ENCODE measurements at regions of chr2 and their contacts with region 1.

Region 1: GRCh38 chr2:240586198-240586918 is at the start of gene CAPN10:
- DNase-seq: peak; percentile 96
- ATAC-seq: peak; percentile 71
- H3K4me3 Mint-ChIP-seq: peak within 1 kb of the TSS; percentile 95
- H3K27ac Mint-ChIP-seq: peak within 1 kb of the TSS; percentile 96
- H3K4me1 Mint-ChIP-seq: peaks cover 58% of the 10 kb centered on the region
- H3K27me3 Mint-ChIP-seq: no peaks in the 10 kb centered on the region
- CTCF ChIP-seq: no peak
- total RNA-seq, gene CAPN10: 55.2 and 61.8 TPM in 2 replicates

Region 2: DNA sequence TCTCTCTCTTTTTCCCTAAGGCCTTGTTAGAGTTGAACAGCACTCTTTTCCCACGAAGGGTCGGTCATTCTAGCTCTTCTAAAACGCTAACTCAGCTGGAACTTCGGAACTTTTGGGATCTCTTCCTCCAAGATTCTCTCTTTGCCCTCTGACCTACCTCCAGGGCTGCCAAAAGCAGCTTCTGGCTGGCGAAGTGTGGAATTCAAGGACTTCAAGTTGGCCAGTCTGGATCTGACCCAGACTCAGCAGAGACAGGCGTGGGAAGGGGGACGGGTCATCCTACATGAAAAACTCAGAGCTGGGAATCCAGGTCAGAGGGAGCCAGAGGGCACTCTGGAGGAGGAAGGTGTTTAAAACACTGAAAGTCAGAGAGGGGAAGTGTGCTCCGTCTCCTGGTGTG is 880.0 kb before region 1 on chr2:
- CTCF ChIA-PET with region 1: no interaction called
- POLR2A ChIA-PET with region 1: no interaction called
- intact Hi-C with region 1: no loop called
- DNase-seq: no peak
- ATAC-seq: no peak
- H3K4me3 Mint-ChIP-seq: no peak overlapping the region
- H3K27ac Mint-ChIP-seq: no peak overlapping the region
- H3K4me1 Mint-ChIP-seq: no peaks in the 10 kb centered on the region
- H3K27me3 Mint-ChIP-seq: peaks cover 16% of the 10 kb centered on the region
- CTCF ChIP-seq: no peak

Region 3: GRCh38 chr2:240021488-240022104 is 564.8 kb before region 1 on chr2:
- CTCF ChIA-PET with region 1: no interaction called
- POLR2A ChIA-PET with region 1: interaction called, 11 read pairs
- intact Hi-C with region 1: no loop called
- DNase-seq: peak; percentile 50
- ATAC-seq: peak; percentile 23
- H3K4me3 Mint-ChIP-seq: no peak overlapping the region
- H3K27ac Mint-ChIP-seq: no peak overlapping the region
- H3K4me1 Mint-ChIP-seq: peaks cover 16% of the 10 kb centered on the region
- H3K27me3 Mint-ChIP-seq: no peaks in the 10 kb centered on the region
- CTCF ChIP-seq: no peak

Region 4: DNA sequence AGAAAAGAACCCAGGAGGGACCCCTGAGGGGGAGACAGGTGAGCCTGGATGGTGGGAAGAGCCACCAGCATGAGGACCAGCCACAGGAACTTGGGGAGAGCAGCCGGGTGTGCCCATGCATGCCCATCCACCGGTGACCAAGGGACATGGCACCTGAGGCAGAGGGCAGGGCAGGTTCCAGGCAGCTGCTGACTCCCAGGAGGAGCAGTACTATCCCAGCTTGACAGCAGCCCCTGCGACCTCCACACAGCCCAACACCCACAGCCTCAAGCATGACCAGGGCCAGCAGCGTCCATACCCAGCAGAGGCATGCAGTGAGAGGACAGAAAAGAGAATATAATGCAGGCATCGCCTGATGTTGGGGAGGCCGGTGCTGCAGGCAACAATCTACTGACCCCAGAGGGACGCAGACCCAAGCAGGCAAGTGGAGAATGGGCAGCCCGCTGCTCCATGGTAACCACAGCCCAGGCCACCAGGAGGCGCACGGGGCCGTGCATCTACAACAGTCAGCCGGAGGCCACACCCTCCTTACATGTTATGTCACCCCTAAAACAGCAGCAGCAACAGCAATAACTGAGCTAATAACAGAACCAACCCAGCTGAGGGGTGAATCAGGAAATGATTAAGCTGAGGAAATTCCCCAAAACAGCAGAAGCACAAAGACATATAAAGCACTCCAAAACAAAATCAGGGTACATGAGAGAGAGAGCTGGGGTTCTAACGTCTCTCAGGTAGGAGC is 72.6 kb before region 1 on chr2:
- CTCF ChIA-PET with region 1: interaction called, 11 read pairs
- POLR2A ChIA-PET with region 1: interaction called, 14 read pairs
- intact Hi-C with region 1: loop called (anchors 1 kb)
- DNase-seq: peak; percentile 71
- ATAC-seq: peak; percentile 99
- H3K4me3 Mint-ChIP-seq: peak overlapping the region; percentile 28
- H3K27ac Mint-ChIP-seq: peak overlapping the region; percentile 59
- H3K4me1 Mint-ChIP-seq: peaks cover 17% of the 10 kb centered on the region
- H3K27me3 Mint-ChIP-seq: no peaks in the 10 kb centered on the region
- CTCF ChIP-seq: peak; percentile 23

Region 5: DNA sequence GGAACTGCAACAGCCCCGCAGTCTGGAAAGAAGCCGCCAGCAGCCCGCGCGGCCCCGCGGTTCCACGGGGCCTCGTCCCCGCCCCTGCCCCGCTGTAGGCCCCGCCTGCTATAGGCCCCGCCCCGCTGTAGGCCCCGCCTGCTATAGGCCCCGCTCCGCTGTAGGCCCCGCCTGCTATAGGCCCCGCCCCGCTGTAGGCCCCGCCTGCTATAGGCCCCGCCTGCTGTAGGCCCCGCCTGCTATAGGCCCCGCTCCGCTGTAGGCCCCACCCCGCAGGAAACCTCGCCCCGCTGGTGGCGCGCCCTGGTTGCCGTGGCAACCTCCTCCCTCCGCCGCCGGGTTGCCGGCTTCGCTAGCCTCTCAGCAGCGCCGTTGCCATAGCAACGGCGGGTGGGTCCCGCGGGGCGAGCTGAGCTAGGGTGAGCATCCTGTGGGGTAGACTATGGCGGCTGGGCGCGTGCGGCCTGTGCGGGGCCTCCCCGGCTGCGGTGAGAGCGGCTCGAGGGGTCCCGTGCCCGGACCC is 245.9 kb after region 1 on chr2:
- CTCF ChIA-PET with region 1: no interaction called
- POLR2A ChIA-PET with region 1: no interaction called
- intact Hi-C with region 1: loop called (anchors 1 kb)
- DNase-seq: peak; percentile 89
- ATAC-seq: peak; percentile 94
- H3K4me3 Mint-ChIP-seq: peak overlapping the region; percentile 55
- H3K27ac Mint-ChIP-seq: no peak overlapping the region
- H3K4me1 Mint-ChIP-seq: peaks cover 5% of the 10 kb centered on the region
- H3K27me3 Mint-ChIP-seq: peaks cover 18% of the 10 kb centered on the region
- CTCF ChIP-seq: no peak

Measured in activated B cell treated with CpG ODN at 0.5 μM for 24 hours (primary cell).